IMR-90 (cell line): ENCODE measurements at regions of chr1 and their contacts with region 1.

Region 1: GRCh38 chr1:85276215-85276977 is at the start of gene BCL10:
- DNase-seq: peak; percentile 97
- ATAC-seq: peak; percentile 96
- H3K4me3 ChIP-seq: peak within 1 kb of the TSS; percentile 97
- H3K27ac ChIP-seq: peak within 1 kb of the TSS; percentile 98
- H3K4me1 ChIP-seq: peaks cover 6% of the 10 kb centered on the region
- H3K27me3 ChIP-seq: no peaks in the 10 kb centered on the region
- CTCF ChIP-seq: no peak
- POLR2A ChIP-seq: peak; percentile 90
- RAD21 ChIP-seq: no peak
- total RNA-seq, gene BCL10: 30.5 and 51.4 TPM in 2 replicates

Region 2: DNA sequence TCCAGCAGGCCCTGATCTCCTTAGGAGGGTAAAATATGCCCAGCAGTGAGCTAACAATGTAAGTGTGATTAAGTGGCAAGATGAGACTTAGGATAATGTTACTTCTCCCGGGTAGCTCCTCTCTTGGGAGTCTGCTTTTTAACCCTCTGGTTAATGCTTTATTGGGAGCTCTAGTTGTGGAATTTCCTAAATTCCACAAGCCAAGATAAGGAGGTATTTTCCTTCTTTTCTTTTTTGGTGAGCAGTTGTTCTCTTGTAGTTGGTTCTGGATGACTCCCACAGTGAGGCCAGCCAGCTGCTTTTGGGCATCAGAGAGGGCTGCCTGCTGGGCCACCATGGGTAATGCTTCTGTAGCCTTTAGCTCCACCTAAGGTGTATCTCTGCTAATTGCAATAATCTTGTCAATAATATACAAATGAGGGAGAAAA is 36.2 kb before region 1 on chr1:
- CTCF ChIA-PET with region 1: no interaction called
- POLR2A ChIA-PET with region 1: no interaction called
- dilution Hi-C with region 1: no loop called
- in situ Hi-C with region 1: no loop called
- intact Hi-C with region 1: no loop called
- DNase-seq: peak; percentile 18
- ATAC-seq: peak; percentile 68
- H3K4me3 ChIP-seq: no peak overlapping the region
- H3K27ac ChIP-seq: peak overlapping the region; percentile 37; the same call in 1 of the 2 replicates
- H3K4me1 ChIP-seq: peaks cover 22% of the 10 kb centered on the region
- H3K27me3 ChIP-seq: peaks cover 2% of the 10 kb centered on the region; the same call in 1 of the 2 replicates
- CTCF ChIP-seq: peak; percentile 25
- POLR2A ChIP-seq: no peak
- RAD21 ChIP-seq: peak; percentile 28

Region 3: DNA sequence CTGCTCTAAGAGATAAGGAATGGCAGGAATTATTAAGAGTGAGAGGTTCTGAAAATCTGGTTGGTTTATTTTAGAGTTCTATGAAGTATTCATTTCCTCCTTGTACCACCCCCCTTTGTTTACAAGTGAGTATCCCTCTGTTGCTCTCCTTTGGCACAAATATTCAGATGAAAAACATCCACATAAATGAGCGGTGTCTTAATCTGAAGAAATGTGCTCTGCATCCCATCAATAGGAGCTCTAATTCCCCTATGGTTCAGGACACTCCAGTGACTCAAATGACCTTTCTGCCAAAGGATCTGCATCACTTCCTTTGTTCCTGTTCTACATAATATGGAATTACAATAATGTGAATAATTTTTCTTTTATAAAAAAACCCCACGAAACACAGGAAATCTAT is 172.0 kb after region 1 on chr1:
- CTCF ChIA-PET with region 1: no interaction called
- POLR2A ChIA-PET with region 1: no interaction called
- dilution Hi-C with region 1: no loop called
- in situ Hi-C with region 1: no loop called
- intact Hi-C with region 1: no loop called
- DNase-seq: peak; percentile 66
- ATAC-seq: peak; percentile 25
- H3K4me3 ChIP-seq: no peak overlapping the region
- H3K27ac ChIP-seq: peak overlapping the region; percentile 15; the same call in 1 of the 2 replicates
- H3K4me1 ChIP-seq: peaks cover 22% of the 10 kb centered on the region
- H3K27me3 ChIP-seq: no peaks in the 10 kb centered on the region
- CTCF ChIP-seq: no peak
- POLR2A ChIP-seq: no peak
- RAD21 ChIP-seq: no peak

Region 4: DNA sequence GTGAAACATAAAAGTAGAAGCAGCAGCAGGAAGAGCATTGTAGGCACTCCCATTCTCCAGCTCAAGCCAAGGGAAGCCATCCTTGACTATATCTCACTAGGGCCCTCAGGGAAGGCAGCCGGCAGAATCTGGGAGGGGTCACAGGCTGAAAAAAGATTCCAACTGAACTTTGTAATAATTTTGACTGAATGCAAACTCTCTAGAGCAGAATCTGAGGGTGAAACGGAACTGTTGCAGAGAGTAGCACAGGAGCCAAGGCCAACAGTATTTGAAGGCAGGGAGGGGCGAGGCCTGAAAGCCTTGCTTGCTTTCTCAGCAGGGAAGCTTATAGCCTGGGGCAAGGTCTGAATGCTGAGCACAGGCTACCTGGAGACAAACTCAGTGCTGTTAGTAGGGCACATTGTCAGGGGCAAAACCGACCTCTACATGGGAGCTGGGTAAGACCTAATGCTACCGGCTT is 699.5 kb after region 1 on chr1:
- CTCF ChIA-PET with region 1: no interaction called
- POLR2A ChIA-PET with region 1: no interaction called
- dilution Hi-C with region 1: no loop called
- in situ Hi-C with region 1: no loop called
- intact Hi-C with region 1: no loop called
- DNase-seq: no peak
- ATAC-seq: no peak
- H3K4me3 ChIP-seq: no peak overlapping the region
- H3K27ac ChIP-seq: no peak overlapping the region
- H3K4me1 ChIP-seq: no peaks in the 10 kb centered on the region
- H3K27me3 ChIP-seq: no peaks in the 10 kb centered on the region
- CTCF ChIP-seq: no peak
- POLR2A ChIP-seq: no peak
- RAD21 ChIP-seq: no peak

Region 5: GRCh38 chr1:86362807-86363206 is 1086.4 kb after region 1 on chr1:
- CTCF ChIA-PET with region 1: no interaction called
- POLR2A ChIA-PET with region 1: no interaction called
- dilution Hi-C with region 1: no loop called
- in situ Hi-C with region 1: no loop called
- intact Hi-C with region 1: loop called (anchors 5 kb)
- DNase-seq: no peak
- ATAC-seq: no peak
- H3K4me3 ChIP-seq: no peak overlapping the region
- H3K27ac ChIP-seq: no peak overlapping the region
- H3K4me1 ChIP-seq: no peaks in the 10 kb centered on the region
- H3K27me3 ChIP-seq: no peaks in the 10 kb centered on the region
- CTCF ChIP-seq: no peak
- POLR2A ChIP-seq: no peak
- RAD21 ChIP-seq: no peak